ENCODE measurements at regions of chr3 and their contacts with region 1.

Region 1: DNA sequence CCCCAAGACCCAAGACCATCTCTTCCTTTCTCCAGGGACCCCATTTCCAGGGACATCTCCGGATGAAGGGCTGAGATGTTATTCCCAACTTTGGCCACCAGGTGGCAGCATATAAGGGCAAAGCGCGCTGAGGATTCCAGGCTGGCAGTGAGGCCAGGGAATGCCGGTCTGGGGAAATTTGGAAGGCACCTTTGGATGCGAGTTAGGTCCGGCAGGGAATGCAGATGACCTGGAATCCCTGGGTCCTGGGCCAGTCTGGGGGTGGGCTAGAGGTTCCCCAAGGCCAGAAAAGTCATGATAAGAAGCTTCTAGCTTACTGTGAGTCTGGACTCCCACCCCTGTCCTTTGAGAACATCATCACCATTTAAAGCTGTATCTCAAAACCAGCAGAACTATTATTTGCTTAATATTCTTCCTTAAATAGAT is 1.6 kb upstream of the CHST13 start:
- DNase-seq: peak; percentile 50
- ATAC-seq: no peak
- H3K4me3 Mint-ChIP-seq: no peak overlapping the region
- H3K27ac Mint-ChIP-seq: no peak overlapping the region
- H3K4me1 Mint-ChIP-seq: peaks cover 5% of the 10 kb centered on the region
- H3K27me3 Mint-ChIP-seq: peaks cover 20% of the 10 kb centered on the region

Region 2: DNA sequence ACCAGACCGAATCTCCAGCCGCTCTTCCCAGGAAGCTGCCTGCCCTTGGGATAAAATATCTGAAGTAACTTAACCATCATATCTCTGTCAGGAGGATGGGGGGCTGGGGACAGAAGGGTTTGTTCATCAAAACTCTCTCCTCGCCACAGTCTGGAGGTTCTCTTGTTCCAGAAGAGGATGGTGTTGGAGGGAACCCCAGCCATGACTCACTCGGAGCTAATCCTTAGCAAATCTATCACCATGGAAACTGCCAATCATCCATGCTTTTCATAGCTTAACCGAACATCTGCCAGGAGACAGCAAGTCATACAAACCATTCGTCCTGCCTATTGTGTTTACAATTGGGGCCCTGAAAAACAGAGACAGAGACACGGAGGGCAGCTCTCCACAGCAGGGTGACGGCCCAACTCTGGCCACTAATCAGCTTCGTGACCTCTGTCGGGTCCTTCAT is 1392.8 kb before region 1 on chr3:
- CTCF ChIA-PET with region 1: no interaction called
- POLR2A ChIA-PET with region 1: no interaction called
- DNase-seq: no peak
- ATAC-seq: no peak
- H3K4me3 Mint-ChIP-seq: no peak overlapping the region
- H3K27ac Mint-ChIP-seq: peak overlapping the region; percentile 57
- H3K4me1 Mint-ChIP-seq: peaks cover 66% of the 10 kb centered on the region
- H3K27me3 Mint-ChIP-seq: peaks cover 4% of the 10 kb centered on the region

Region 3: DNA sequence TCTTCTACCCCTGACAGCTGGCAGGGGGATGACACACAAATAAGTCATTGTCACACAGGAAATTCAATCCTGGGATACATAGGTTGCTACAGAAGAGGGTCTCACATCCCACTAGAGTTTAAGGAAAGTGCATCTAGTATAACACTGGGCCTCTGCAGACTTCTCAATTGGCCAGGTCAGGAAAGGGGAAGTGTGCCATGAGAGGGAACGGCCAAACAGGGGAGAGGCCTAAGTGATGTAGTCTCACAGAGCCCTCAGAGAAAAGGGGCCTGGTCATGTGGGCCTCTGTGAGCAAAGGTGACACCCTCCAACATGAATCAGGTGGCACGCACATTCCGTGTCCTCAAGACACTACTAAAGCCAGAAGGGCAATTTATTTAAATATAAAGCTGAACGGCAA is 57.9 kb before region 1 on chr3:
- CTCF ChIA-PET with region 1: no interaction called
- POLR2A ChIA-PET with region 1: no interaction called
- DNase-seq: no peak
- ATAC-seq: no peak
- H3K4me3 Mint-ChIP-seq: no peak overlapping the region
- H3K27ac Mint-ChIP-seq: peak overlapping the region; percentile 17
- H3K4me1 Mint-ChIP-seq: peaks cover 18% of the 10 kb centered on the region
- H3K27me3 Mint-ChIP-seq: no peaks in the 10 kb centered on the region

Region 4: DNA sequence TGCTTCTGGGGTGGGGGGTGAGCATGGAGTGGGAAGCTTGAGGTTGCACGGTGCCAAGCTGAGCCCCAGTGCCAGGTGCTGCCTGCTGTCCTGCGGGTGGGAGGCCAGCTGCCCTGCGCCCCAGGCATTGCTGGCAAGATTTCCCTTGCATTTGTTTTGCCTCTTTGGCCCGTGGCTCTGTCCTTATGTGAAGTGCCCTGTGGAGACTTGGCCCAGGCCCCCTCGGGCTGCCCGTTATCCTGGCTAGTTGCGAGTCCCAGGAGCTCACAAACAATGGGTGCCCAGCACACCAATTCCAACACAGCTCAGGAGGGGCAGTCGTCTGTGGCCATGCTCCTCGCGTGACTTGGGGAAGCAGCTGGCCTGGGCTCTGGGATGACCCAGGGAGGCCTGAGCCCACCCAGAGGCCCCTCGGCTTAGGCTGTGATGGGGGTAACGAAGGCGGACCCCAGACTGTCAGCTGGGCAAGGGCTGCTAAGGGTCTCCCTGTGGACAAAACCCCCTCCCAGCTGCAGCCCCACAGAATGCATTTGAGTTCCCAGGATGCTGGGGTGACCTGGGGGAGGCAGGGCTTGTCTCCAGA is 30.4 kb after region 1 on chr3:
- CTCF ChIA-PET with region 1: no interaction called
- POLR2A ChIA-PET with region 1: no interaction called
- DNase-seq: no peak
- ATAC-seq: no peak
- H3K4me3 Mint-ChIP-seq: no peak overlapping the region
- H3K27ac Mint-ChIP-seq: no peak overlapping the region
- H3K4me1 Mint-ChIP-seq: no peaks in the 10 kb centered on the region
- H3K27me3 Mint-ChIP-seq: no peaks in the 10 kb centered on the region

Region 5: DNA sequence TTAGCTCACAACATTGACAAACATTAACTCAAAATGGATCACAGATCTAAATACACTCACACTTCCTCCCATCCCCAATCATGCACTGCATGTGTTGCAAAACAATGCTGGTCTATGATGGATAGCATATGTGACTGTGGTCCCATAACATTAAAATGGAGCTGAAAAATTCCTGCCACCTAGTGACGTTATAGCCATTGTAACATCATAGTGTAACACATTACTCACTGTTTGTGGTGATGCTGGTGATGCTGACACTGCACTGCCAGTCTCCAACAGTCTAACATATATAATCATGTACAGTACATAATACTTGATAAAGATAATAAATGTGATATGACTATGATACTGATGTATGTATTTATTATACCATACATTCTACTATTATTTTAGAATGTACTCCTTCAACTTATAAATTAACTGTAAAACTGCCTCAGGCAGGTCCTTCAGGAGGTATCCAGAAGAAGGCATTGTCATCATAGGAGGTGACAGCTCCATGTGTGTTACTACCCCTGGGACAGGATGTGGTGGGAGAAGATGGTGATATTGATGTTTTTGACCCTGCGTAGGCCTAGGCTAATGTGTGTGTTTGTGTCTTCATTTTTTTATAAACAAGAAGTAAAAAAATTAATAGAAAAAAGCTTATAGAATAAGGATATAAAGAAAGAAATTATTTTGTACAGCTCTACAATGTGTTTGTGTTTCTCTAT is 91.3 kb after region 1 on chr3:
- CTCF ChIA-PET with region 1: interaction called, 11 read pairs
- POLR2A ChIA-PET with region 1: no interaction called
- DNase-seq: no peak
- ATAC-seq: no peak
- H3K4me3 Mint-ChIP-seq: no peak overlapping the region
- H3K27ac Mint-ChIP-seq: peak overlapping the region; percentile 41
- H3K4me1 Mint-ChIP-seq: peaks cover 30% of the 10 kb centered on the region
- H3K27me3 Mint-ChIP-seq: no peaks in the 10 kb centered on the region